Activated B cell treated with CpG ODN at 0.5 μM for 24 hours (primary cell): ENCODE measurements at regions of chr21 and their contacts with region 1.

Region 1: DNA sequence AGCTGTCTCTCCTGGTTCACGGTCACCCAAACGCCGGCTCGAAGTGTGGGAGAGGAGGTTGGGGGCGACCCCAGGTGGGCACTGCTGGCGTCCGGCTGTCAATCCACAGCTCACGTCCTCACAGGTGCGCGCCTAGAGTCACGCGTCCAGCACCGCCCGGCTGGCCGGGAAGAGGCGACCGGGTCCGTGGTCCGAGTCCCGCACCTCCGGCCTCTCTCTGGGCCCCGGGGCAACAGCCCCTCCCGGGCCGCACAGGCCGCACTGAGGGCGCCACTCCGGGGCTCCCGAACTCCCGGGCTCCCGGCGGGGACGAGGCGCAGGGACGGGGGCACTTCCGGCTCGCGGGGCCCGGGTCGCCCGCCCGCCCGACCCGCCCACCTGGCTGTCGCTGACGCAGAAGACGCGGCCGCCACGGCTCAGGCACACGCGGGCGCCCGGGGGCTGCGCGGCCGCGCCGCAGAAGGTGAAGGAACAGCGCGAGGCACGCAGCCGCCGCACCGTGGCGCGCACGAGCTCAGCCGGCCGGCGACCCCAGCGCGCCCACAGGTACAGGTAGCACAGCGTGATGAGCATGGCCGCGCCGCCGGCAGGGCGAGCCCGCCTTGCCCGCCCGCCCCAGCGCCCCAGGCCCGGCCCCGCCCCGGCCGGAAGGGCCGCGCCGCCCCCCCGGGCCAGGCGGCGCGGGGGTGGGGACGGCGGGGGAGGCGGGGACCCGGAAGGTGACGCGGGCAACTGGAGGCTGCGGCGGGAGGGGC is at the start of gene HLCS:
- DNase-seq: peak; percentile 77
- ATAC-seq: peak; percentile 92
- H3K4me3 Mint-ChIP-seq: peak within 1 kb of the TSS; percentile 85
- H3K27ac Mint-ChIP-seq: peak within 1 kb of the TSS; percentile 80
- H3K4me1 Mint-ChIP-seq: peaks cover 20% of the 10 kb centered on the region
- H3K27me3 Mint-ChIP-seq: no peaks in the 10 kb centered on the region
- CTCF ChIP-seq: no peak
- total RNA-seq, gene HLCS: 8.1 and 10.6 TPM in 2 replicates

Region 2: GRCh38 chr21:36989699-36990507 is 23.7 kb after region 1 on chr21:
- CTCF ChIA-PET with region 1: interaction called, 24 read pairs
- POLR2A ChIA-PET with region 1: interaction called, 16 read pairs
- intact Hi-C with region 1: loop called (anchors 1 kb)
- DNase-seq: peak; percentile 91
- ATAC-seq: peak; percentile 92
- H3K4me3 Mint-ChIP-seq: peak overlapping the region; percentile 83
- H3K27ac Mint-ChIP-seq: peak overlapping the region; percentile 80
- H3K4me1 Mint-ChIP-seq: peaks cover 10% of the 10 kb centered on the region
- H3K27me3 Mint-ChIP-seq: no peaks in the 10 kb centered on the region
- CTCF ChIP-seq: peak; percentile 27